ENCODE measurements at regions of chr11 and their contacts with region 1.

Region 1: DNA sequence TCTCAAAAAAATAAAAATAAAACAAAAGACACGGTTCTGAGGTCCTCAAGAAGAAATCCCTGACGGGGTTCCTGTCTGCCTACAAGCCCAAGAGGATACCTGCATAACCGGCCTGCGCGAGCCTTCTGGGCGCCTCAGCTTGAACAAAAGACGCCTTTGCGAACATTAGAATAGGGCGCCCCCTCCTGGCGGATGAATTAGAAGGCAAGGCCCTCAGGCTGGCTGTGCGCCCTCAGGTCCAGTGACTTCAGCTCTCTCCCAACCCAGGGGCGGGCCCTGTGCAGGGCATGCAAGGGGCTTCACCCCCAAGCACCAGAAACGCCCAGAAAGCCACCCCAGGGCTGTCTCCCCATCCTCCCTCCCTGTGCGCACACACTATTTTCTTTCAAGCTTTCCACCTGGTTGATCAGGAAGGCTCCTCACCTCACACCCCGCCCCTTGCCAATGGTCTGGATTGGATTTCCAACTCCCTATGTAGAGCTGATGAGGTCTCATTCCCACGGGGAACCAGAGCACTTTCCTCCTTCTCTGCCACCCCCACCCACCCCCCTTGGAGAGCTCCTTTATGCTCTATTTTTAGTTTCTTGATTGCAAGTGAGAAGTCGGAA is 273.3 kb downstream of the BUD13 start:
- DNase-seq: peak; percentile 98
- ATAC-seq: peak; percentile 84
- H3K4me3 Mint-ChIP-seq: 0 out of 2 replicates have a peak overlapping the region, but pooled peaks have one; percentile 18
- H3K27ac Mint-ChIP-seq: no peak overlapping the region
- H3K4me1 Mint-ChIP-seq: peaks cover 48% of the 10 kb centered on the region
- H3K27me3 Mint-ChIP-seq: peaks cover 27% of the 10 kb centered on the region
- CTCF ChIP-seq: peak; percentile 85

Region 2: GRCh38 chr11:116312570-116313391 is 186.7 kb before region 1 on chr11:
- CTCF ChIA-PET with region 1: interaction called, 18 read pairs
- POLR2A ChIA-PET with region 1: no interaction called
- DNase-seq: no peak
- ATAC-seq: peak; percentile 53
- H3K4me3 Mint-ChIP-seq: no peak overlapping the region
- H3K27ac Mint-ChIP-seq: no peak overlapping the region
- H3K4me1 Mint-ChIP-seq: peaks cover 60% of the 10 kb centered on the region
- H3K27me3 Mint-ChIP-seq: no peaks in the 10 kb centered on the region
- CTCF ChIP-seq: no peak

Region 3: DNA sequence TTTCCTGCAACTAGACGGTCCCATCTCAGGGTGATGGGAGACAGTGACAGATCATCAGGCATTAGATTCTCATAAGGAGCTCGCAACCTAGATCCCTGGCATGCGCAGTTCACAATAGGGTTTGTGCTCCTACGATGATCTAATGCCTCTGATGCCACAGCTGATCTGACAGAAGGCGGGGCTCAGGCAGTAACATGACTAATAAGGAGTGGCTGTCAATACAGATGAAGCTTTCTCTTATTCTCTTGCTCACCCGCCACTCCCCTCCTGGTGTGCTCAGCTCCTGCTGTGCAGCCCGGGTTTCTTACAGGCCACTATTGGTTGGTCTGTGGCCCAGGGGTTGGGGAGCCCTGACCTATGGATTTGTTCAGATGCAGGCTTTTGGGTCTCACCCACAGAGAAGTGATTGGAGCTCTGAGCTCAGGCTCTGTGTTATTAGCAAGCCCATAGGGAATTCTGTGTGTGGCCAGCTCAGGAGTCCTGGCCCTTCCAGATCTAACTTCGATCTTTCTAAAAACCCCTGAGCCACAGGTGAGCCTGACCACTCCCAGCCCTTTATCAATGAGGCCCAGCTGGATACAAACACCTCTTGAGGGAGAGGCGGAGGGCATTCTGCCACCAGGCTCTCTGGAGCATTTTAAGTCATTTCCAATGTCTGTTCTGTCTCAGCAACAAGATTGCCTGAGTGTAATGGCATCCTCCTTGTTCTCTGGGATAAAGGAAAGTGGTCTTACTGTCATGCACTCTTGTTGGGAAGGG is 78.6 kb before region 1 on chr11:
- CTCF ChIA-PET with region 1: interaction called, 30 read pairs
- POLR2A ChIA-PET with region 1: no interaction called
- DNase-seq: no peak
- ATAC-seq: no peak
- H3K4me3 Mint-ChIP-seq: no peak overlapping the region
- H3K27ac Mint-ChIP-seq: no peak overlapping the region
- H3K4me1 Mint-ChIP-seq: peaks cover 39% of the 10 kb centered on the region
- H3K27me3 Mint-ChIP-seq: peaks cover 2% of the 10 kb centered on the region; the same call in 1 of the 2 replicates
- CTCF ChIP-seq: no peak

Region 4: GRCh38 chr11:116454020-116454645 is 45.4 kb before region 1 on chr11:
- CTCF ChIA-PET with region 1: interaction called, 74 read pairs
- POLR2A ChIA-PET with region 1: interaction called, 3 read pairs
- DNase-seq: peak; percentile 76
- ATAC-seq: peak; percentile 79
- H3K4me3 Mint-ChIP-seq: no peak overlapping the region
- H3K27ac Mint-ChIP-seq: no peak overlapping the region
- H3K4me1 Mint-ChIP-seq: peaks cover 51% of the 10 kb centered on the region
- H3K27me3 Mint-ChIP-seq: peaks cover 14% of the 10 kb centered on the region
- CTCF ChIP-seq: no peak; the same call in 1 of the 2 replicates

Region 5: GRCh38 chr11:116482716-116483115 is 16.8 kb before region 1 on chr11:
- CTCF ChIA-PET with region 1: interaction called, 19 read pairs
- POLR2A ChIA-PET with region 1: no interaction called
- DNase-seq: no peak
- ATAC-seq: no peak
- H3K4me3 Mint-ChIP-seq: no peak overlapping the region
- H3K27ac Mint-ChIP-seq: no peak overlapping the region
- H3K4me1 Mint-ChIP-seq: no peaks in the 10 kb centered on the region
- H3K27me3 Mint-ChIP-seq: peaks cover 30% of the 10 kb centered on the region
- CTCF ChIP-seq: no peak

Region 6: GRCh38 chr11:116579031-116579653 is 79.6 kb after region 1 on chr11:
- CTCF ChIA-PET with region 1: interaction called, 12 read pairs
- POLR2A ChIA-PET with region 1: no interaction called
- DNase-seq: peak; percentile 41
- ATAC-seq: peak; percentile 12
- H3K4me3 Mint-ChIP-seq: peak overlapping the region; percentile 64
- H3K27ac Mint-ChIP-seq: no peak overlapping the region
- H3K4me1 Mint-ChIP-seq: peaks cover 32% of the 10 kb centered on the region
- H3K27me3 Mint-ChIP-seq: peaks cover 78% of the 10 kb centered on the region
- CTCF ChIP-seq: no peak

Measured in WTC11 (cell line).